ENCODE measurements at regions of chr1 and their contacts with region 1.

Region 1: GRCh38 chr1:182391362-182392044 is at the start of gene GLUL:
- DNase-seq: peak; percentile 80 to 92
- H3K4me3 ChIP-seq: peak within 1 kb of the TSS; percentile 74
- H3K4me1 ChIP-seq: peaks cover 27% of the 10 kb centered on the region
- H3K27me3 ChIP-seq: no peaks in the 10 kb centered on the region

Region 2: GRCh38 chr1:182084487-182085316 is 306.8 kb before region 1 on chr1:
- in situ Hi-C with region 1: loop called (anchors 10 kb)
- DNase-seq: peak; percentile 61 to 87
- H3K4me3 ChIP-seq: no peak overlapping the region
- H3K4me1 ChIP-seq: no peaks in the 10 kb centered on the region
- H3K27me3 ChIP-seq: no peaks in the 10 kb centered on the region

Region 3: DNA sequence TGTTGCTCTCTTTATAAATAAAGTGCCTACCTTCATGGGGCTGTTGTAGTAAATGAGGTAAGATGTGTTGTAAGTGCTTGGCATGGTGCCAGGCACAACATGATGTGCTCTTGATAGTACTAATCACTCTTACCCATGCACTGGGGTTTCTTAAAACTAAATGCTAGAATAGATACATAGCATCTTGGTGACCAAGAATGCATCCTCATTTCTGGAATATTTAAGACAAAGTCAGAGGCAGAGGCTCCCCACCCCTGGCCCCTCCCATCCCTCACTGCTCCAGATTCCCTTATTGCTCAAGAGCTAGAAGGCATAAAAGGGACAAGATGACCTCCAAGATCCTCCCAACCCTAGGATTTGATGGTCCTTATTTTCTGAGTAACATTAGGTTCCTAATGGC is 61.2 kb before region 1 on chr1:
- in situ Hi-C with region 1: loop called (anchors 5 kb)
- DNase-seq: no peak
- H3K4me3 ChIP-seq: no peak overlapping the region
- H3K4me1 ChIP-seq: peaks cover 31% of the 10 kb centered on the region
- H3K27me3 ChIP-seq: no peaks in the 10 kb centered on the region

Region 4: DNA sequence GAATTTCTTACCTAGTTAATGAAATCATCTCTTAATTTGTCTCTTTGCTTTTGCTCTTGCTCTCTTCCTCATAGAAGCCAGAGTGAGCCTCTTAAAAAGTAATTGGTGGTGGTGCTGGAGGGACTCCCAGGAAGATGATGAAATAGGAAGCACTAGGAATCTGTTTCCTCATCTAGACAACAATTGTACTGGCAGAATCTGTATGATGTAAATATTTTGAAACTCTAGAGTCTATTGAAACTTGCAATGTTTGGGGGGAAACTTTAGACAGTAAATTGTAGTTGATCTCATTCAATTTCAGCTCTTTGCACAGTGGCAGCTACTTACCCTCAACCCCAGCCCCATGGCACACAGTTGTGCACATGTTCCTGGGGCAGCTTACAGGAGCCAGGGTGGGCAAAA is 69.0 kb after region 1 on chr1:
- in situ Hi-C with region 1: no loop called
- DNase-seq: no peak
- H3K4me3 ChIP-seq: no peak overlapping the region
- H3K4me1 ChIP-seq: no peaks in the 10 kb centered on the region
- H3K27me3 ChIP-seq: peaks cover 12% of the 10 kb centered on the region; the same call in 1 of the 2 replicates

Region 5: GRCh38 chr1:182649041-182649440 is 257.5 kb after region 1 on chr1:
- in situ Hi-C with region 1: no loop called
- DNase-seq: no peak
- H3K4me3 ChIP-seq: no peak overlapping the region
- H3K4me1 ChIP-seq: no peaks in the 10 kb centered on the region
- H3K27me3 ChIP-seq: no peaks in the 10 kb centered on the region; the same call in 1 of the 2 replicates